Heart left ventricle (tissue), 16 donors: ENCODE measurements at regions of chr4 and their contacts with region 1.

Region 1: GRCh38 chr4:73127839-73128453 is 58.4 kb upstream of the COX18 start:
- DNase-seq: no peak
- ATAC-seq: peak in 3 of 4 donors; percentile 67 to 70 (median 69)
- H3K4me3 ChIP-seq: no peak overlapping the region
- H3K27ac ChIP-seq: no peak overlapping the region
- H3K4me1 ChIP-seq: no peaks in the 10 kb centered on the region
- H3K27me3 ChIP-seq: no peaks in the 10 kb centered on the region
- CTCF ChIP-seq: peak in 7 of 12 donors; percentile 18 to 48 (median 29)
- POLR2A ChIP-seq: no peak

Region 2: GRCh38 chr4:72918362-72918761 is 209.6 kb before region 1 on chr4:
- intact Hi-C with region 1: no loop called
- DNase-seq: no peak
- ATAC-seq: no peak
- H3K4me3 ChIP-seq: no peak overlapping the region
- H3K27ac ChIP-seq: no peak overlapping the region
- H3K4me1 ChIP-seq: no peaks in the 10 kb centered on the region
- H3K27me3 ChIP-seq: no peaks in the 10 kb centered on the region
- CTCF ChIP-seq: no peak
- POLR2A ChIP-seq: no peak

Region 3: GRCh38 chr4:72938516-72938915 is 189.4 kb before region 1 on chr4:
- intact Hi-C with region 1: no loop called
- DNase-seq: no peak
- ATAC-seq: no peak
- H3K4me3 ChIP-seq: no peak overlapping the region
- H3K27ac ChIP-seq: no peak overlapping the region
- H3K4me1 ChIP-seq: no peaks in the 10 kb centered on the region
- H3K27me3 ChIP-seq: no peaks in the 10 kb centered on the region
- CTCF ChIP-seq: no peak
- POLR2A ChIP-seq: no peak

Region 4: DNA sequence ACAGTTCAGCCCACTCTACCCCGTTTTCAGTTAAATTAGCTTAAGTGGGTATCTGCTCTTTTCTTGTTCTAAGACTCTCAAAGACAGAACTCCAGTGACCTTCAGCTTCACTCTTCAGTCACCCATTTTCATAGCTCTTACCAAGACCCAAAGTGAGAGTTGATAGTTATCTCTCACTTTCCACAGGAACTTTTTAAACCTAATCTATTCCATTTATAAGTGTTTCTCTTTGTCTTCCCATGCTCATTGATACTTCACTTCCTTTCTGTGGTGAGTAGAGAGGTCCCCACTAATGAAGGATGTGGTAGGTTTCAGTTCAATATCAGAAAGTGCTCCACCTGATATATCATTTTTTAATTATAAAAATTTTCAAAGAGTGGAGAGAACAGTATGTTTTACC is 91.8 kb before region 1 on chr4:
- intact Hi-C with region 1: no loop called
- DNase-seq: no peak
- ATAC-seq: no peak
- H3K4me3 ChIP-seq: no peak overlapping the region
- H3K27ac ChIP-seq: no peak overlapping the region
- H3K4me1 ChIP-seq: no peaks in the 10 kb centered on the region
- H3K27me3 ChIP-seq: no peaks in the 10 kb centered on the region
- CTCF ChIP-seq: no peak
- POLR2A ChIP-seq: no peak

Region 5: DNA sequence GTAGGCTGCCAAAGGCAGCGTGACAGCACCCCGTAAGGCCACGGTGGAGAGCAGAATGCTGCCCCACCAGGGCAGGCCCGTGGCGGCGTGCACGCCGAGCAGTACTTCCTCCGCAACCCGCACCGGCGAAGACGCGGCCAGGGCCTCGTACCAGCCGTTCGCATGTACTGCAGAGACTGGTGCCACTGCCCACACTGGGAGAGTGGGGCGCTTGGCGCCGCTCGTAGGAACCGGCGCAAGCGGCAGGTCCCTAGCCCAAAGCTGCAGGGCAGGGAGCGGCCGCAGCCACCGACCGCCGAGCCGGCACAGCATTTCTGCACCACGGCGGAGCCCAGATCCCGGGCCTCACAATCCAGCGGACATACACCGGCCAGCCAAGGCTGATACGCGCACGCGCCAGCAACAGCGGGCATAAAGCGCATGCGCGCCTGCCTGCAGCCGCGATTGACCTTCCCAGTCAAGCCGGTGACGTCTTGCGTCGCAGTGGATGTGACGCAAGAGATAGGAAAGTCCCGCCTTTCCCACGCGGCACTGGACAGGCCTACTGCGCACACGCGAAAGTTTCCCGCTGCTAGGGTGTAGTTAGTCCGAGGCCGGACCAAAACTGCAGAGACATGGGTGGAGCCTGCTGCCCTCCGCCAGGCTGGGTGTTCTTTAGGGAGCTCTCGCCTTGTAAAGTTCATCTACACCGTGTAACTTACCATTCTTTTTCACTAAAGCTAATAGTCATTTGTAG is 58.4 kb before region 1 on chr4 and contains the start of gene COX18:
- intact Hi-C with region 1: loop called in 2 of 10 experiments (anchors 10 kb)
- DNase-seq: peak; percentile 97 to 99 (median 99)
- ATAC-seq: peak; percentile 96 to 99 (median 97)
- H3K4me3 ChIP-seq: peak within 1 kb of the TSS; percentile 69 to 96 (median 82)
- H3K27ac ChIP-seq: peak within 1 kb of the TSS; percentile 88 to 99 (median 97)
- H3K4me1 ChIP-seq: peaks cover 0 to 24% (median 15%) of the 10 kb centered on the region in 12 donors
- H3K27me3 ChIP-seq: no peaks in the 10 kb centered on the region
- CTCF ChIP-seq: peak in 3 of 12 donors; percentile 6 to 12 (median 11)
- POLR2A ChIP-seq: peak in 1 of 2 donors; percentile 91
- total RNA-seq, gene COX18: 14.0 to 32.2 (median 17.9) TPM

Region 6: DNA sequence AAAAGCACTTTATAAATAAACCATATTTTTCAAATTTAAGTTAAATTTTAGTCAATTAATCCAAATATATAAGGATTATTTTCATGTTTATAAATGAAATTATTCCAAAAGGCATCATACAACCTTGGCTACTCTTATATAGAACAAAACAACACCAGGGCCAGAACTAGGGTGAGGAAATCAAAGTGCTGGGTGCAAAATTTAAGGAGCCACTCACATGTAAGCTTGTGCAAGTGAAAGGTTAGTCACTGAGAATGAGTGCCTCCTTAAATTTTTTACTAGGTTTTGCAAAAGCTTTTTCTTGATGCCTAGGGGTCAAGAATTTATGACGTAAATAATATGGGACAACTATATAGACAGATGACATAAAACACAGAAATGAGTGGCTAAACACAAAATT is 24.9 kb after region 1 on chr4:
- intact Hi-C with region 1: loop called in 1 of 10 experiments (anchors 2 kb)
- DNase-seq: no peak
- ATAC-seq: no peak
- H3K4me3 ChIP-seq: no peak overlapping the region
- H3K27ac ChIP-seq: no peak overlapping the region
- H3K4me1 ChIP-seq: no peaks in the 10 kb centered on the region
- H3K27me3 ChIP-seq: no peaks in the 10 kb centered on the region
- CTCF ChIP-seq: no peak
- POLR2A ChIP-seq: no peak

Region 7: DNA sequence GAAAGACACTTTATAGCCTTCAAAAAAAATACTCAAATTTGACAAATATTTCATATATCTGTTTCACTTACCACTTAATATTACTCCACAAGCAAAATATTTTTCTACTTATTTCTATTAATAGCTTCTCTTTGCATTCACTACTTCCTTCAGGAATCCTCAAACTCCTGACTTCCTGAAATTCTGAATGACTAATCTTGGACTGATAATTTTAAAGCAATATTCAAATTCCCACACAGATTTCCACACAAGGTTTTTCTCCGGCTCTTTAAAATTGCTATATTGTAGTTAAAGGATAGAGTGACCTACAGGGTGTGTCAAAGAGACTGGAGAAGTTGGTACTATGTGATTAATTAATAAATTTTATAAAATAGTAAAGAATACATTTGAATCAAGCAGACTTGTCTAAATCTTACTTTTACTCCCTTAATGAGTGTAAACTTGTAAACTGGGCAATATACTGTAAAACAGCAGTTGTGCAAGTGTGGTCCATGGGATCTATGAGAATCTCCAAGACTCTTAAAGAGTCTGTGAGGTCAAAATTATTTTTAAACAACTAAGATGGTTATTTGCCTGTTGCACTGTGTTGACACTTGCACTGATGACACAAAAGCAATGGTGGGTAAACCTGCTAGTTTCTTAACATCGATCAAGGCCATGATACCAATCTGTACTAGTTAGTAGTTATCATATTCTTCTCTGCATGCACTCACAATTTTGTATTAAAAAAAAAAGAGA is 86.1 kb after region 1 on chr4:
- intact Hi-C with region 1: no loop called
- DNase-seq: no peak
- ATAC-seq: peak in 2 of 4 donors; percentile 28 to 46
- H3K4me3 ChIP-seq: no peak overlapping the region
- H3K27ac ChIP-seq: peak overlapping the region in 2 of 12 donors; percentile 20 to 63
- H3K4me1 ChIP-seq: peaks cover 0 to 53% (median 21%) of the 10 kb centered on the region in 12 donors
- H3K27me3 ChIP-seq: no peaks in the 10 kb centered on the region
- CTCF ChIP-seq: no peak
- POLR2A ChIP-seq: no peak